ACHN (cell line): ENCODE measurements at regions of chr16 and their contacts with region 1.

Region 1: GRCh38 chr16:68200088-68200783 is 35.7 kb downstream of the ESRP2 start:
- DNase-seq: no peak

Region 2: GRCh38 chr16:67993189-67994039 is 206.8 kb before region 1 on chr16:
- in situ Hi-C with region 1: loop called (anchors 25 kb)
- DNase-seq: peak; percentile 76

Region 3: DNA sequence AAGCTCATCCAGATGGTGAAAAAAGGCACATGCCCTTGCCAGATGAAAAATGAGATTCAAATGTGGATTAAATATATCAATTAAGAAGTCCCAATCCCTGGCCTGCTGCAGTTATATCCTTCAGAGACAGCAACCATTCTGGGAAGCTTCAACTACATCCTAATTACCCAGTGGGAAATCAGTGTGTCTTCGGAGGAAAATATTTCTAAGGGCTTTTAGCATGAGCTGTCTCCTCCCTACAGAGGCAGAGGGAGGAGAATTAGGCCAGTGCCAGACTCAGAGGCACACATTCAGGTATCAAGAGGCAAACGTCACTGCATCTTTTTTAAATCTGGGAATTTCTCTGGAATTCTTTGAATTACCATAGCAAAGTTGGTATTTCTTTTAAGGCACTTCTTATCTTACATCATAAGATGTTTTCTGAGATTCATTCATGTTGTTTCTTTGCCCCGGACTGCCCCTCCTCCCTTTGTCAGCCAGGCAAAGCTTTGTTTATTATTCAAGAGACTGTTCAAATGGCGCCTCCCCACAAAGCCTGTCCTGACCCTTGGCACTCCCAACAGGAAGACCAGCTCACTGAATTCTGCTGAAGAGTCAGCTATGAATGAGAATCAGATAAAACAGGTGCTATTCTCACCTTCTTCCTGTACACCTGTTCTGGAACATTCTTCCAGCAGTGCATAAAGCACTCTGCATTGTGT is 286.4 kb after region 1 on chr16:
- in situ Hi-C with region 1: no loop called
- DNase-seq: no peak